GM23248 (cell line): ENCODE measurements at regions of chr3 and their contacts with region 1.

Region 1: DNA sequence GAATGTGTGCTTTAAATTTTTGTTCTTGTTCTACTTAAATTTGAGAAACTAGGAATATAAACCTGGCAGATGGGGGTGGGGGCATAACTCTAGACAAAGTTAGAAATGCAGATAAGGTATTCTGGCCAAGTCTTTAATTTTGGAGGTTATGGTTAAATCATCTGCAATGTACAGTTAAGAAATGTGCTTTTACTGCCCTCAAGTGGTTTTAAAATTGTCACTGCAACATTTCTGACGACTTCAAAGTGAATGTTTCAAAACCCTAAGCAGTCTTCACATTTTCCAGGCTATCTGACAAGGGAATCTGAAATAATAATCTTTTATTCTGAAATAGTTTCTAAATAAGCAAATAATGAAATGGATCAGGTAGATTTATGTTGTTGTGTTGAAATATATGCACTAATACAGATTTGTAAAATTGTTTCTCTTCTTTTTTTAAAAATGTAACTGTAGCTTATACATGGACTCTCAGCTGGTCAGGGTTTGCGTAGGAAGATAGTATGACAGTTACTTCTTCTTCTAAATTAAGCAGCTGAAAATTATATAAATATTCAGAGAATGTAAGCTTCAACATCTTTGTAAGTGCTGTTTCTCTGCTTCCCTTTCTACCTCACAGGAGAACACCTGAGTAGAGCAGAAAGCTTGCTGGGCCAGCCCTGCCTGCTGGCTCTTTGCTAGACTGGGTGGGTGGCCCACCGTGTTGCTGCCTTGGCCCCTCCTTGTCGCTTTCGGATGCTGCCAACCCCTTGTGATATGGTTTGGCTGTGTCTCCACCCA is 45.0 kb downstream of the SUCNR1 start:
- DNase-seq: peak; percentile 69
- H3K4me3 ChIP-seq: no peak overlapping the region
- H3K27ac ChIP-seq: no peak overlapping the region
- H3K4me1 ChIP-seq: peaks cover 11% of the 10 kb centered on the region
- H3K27me3 ChIP-seq: no peaks in the 10 kb centered on the region

Region 2: GRCh38 chr3:151290673-151291072 is 627.8 kb before region 1 on chr3:
- in situ Hi-C with region 1: loop called (anchors 10 kb)
- DNase-seq: peak; percentile 73
- H3K4me3 ChIP-seq: no peak overlapping the region
- H3K27ac ChIP-seq: no peak overlapping the region
- H3K4me1 ChIP-seq: no peaks in the 10 kb centered on the region
- H3K27me3 ChIP-seq: no peaks in the 10 kb centered on the region

Region 3: GRCh38 chr3:151439652-151440129 is 478.8 kb before region 1 on chr3:
- in situ Hi-C with region 1: loop called (anchors 10 kb)
- DNase-seq: peak; percentile 79
- H3K4me3 ChIP-seq: no peak overlapping the region
- H3K27ac ChIP-seq: no peak overlapping the region
- H3K4me1 ChIP-seq: peaks cover 29% of the 10 kb centered on the region
- H3K27me3 ChIP-seq: no peaks in the 10 kb centered on the region

Region 4: GRCh38 chr3:151660885-151661284 is 257.6 kb before region 1 on chr3:
- in situ Hi-C with region 1: loop called (anchors 5 kb)
- DNase-seq: peak; percentile 37
- H3K4me3 ChIP-seq: no peak overlapping the region
- H3K27ac ChIP-seq: no peak overlapping the region
- H3K4me1 ChIP-seq: no peaks in the 10 kb centered on the region
- H3K27me3 ChIP-seq: 0 out of 2 replicates have a peak, but pooled peaks cover 4% of the 10 kb centered on the region

Region 5: GRCh38 chr3:152127058-152127457 is 208.6 kb after region 1 on chr3:
- in situ Hi-C with region 1: no loop called
- DNase-seq: no peak
- H3K4me3 ChIP-seq: no peak overlapping the region
- H3K27ac ChIP-seq: no peak overlapping the region
- H3K4me1 ChIP-seq: peaks cover 15% of the 10 kb centered on the region
- H3K27me3 ChIP-seq: no peaks in the 10 kb centered on the region

Region 6: GRCh38 chr3:152452318-152452717 is 533.9 kb after region 1 on chr3:
- in situ Hi-C with region 1: no loop called
- DNase-seq: no peak
- H3K4me3 ChIP-seq: no peak overlapping the region
- H3K27ac ChIP-seq: no peak overlapping the region
- H3K4me1 ChIP-seq: no peaks in the 10 kb centered on the region
- H3K27me3 ChIP-seq: no peaks in the 10 kb centered on the region